Heart right ventricle (tissue), 16 donors: ENCODE measurements at regions of chr19 and their contacts with region 1.

Region 1: DNA sequence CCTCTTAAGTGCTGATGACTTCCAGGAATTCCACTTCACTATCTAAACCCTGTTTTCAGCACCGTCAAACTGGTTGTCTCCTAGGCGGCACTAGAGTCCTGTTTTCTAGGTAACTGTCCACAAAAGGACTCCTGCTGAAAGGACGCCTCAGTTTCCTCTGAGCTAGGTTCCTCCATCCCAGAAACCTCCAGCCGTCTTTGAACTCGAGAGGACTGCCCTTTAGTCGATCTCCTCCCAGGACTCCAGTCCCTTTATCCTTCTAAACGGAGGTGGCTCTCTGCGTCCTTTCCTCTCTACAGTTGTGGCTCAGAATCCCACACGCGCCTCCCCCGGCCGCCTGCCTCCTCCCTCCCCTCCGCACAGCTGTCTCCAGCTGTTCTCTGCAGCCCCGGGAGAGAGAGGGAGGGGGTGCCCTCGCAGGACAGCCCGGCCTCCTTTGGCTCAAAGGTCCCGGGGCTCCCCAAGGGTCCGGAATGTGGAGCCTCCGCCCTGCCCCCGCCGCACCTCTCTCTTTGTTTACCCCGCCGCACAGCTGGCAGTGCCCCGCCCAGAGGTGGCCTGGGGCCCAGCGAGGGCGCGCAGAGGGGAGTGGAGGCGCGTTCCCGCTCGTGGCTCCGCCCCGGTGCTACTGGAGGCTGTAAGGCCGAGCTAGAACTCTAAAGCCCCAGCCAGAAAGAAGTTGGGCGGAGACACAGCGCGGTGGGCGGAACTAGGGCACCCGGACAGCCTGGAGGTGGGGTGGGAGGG is 2.4 kb downstream of the LTBP4 start:
- DNase-seq: peak; percentile 98
- ATAC-seq: peak; percentile 72 to 85 (median 81)
- H3K4me3 ChIP-seq: peak overlapping the region in 9 of 10 donors; percentile 40 to 81 (median 72)
- H3K27ac ChIP-seq: peak overlapping the region; percentile 49 to 96 (median 90)
- H3K4me1 ChIP-seq: peaks cover 26 to 88% (median 74%) of the 10 kb centered on the region in 9 donors
- H3K27me3 ChIP-seq: peaks cover 0 to 68% (median 0%) of the 10 kb centered on the region in 7 donors
- CTCF ChIP-seq: no peak

Region 2: GRCh38 chr19:40285353-40286234 is 318.0 kb before region 1 on chr19:
- intact Hi-C with region 1: loop called in 1 of 10 experiments (anchors 5 kb)
- DNase-seq: peak; percentile 98 to 99
- ATAC-seq: peak; percentile 94 to 98 (median 97)
- H3K4me3 ChIP-seq: peak overlapping the region; percentile 83 to 99 (median 96)
- H3K27ac ChIP-seq: peak overlapping the region; percentile 92 to 100 (median 97)
- H3K4me1 ChIP-seq: peaks cover 18 to 51% (median 45%) of the 10 kb centered on the region in 9 donors
- H3K27me3 ChIP-seq: no peaks in the 10 kb centered on the region
- CTCF ChIP-seq: no peak

Region 3: GRCh38 chr19:40576585-40577451 is 26.7 kb before region 1 on chr19 and contains the start of gene SHKBP1:
- intact Hi-C with region 1: no loop called
- DNase-seq: peak; percentile 96
- ATAC-seq: peak; percentile 97 to 99 (median 99)
- H3K4me3 ChIP-seq: peak within 1 kb of the TSS; percentile 23 to 85 (median 74)
- H3K27ac ChIP-seq: peak within 1 kb of the TSS in 9 of 10 donors; percentile 62 to 93 (median 85)
- H3K4me1 ChIP-seq: peaks cover 0 to 38% (median 13%) of the 10 kb centered on the region in 9 donors
- H3K27me3 ChIP-seq: no peaks in the 10 kb centered on the region
- CTCF ChIP-seq: no peak
- total RNA-seq, gene SHKBP1: 12.0 to 31.5 (median 15.9) TPM

Region 4: DNA sequence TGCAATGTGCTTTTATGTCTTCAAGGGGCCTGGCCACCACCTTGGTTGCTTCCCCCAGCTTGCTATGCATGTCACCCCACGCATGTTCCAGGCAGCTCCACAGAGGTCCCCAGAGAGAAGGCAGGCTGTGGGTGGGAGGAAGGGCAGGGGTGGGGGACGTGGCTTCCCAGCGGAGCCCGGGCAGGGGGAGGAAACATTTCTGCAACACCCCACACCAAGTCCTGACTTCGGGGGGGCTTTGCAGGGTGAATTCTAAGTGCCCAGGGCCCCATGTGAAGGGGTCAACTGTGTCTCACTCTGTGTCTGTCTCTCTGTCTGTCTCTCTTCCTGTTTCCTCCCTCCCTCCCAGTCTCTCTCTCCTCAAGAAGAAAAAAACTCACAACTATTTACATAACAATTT is 37.2 kb after region 1 on chr19:
- intact Hi-C with region 1: loop called in 4 of 10 experiments (anchors 5 kb)
- DNase-seq: peak; percentile 37 to 46
- ATAC-seq: peak; percentile 39 to 63 (median 52)
- H3K4me3 ChIP-seq: no peak overlapping the region
- H3K27ac ChIP-seq: peak overlapping the region in 9 of 10 donors; percentile 46 to 85 (median 56)
- H3K4me1 ChIP-seq: peaks cover 0 to 39% (median 16%) of the 10 kb centered on the region in 9 donors
- H3K27me3 ChIP-seq: no peaks in the 10 kb centered on the region
- CTCF ChIP-seq: no peak